Right cardiac atrium (tissue), 5 donors: ENCODE measurements at regions of chr15 and their contacts with region 1.

Region 1: GRCh38 chr15:52261498-52262242 is 33.9 kb downstream of the MYO5C start:
- DNase-seq: peak; percentile 55 to 75 (median 73)
- ATAC-seq: peak; percentile 90 to 96
- H3K4me3 ChIP-seq: no peak overlapping the region
- H3K27ac ChIP-seq: peak overlapping the region; percentile 13
- H3K4me1 ChIP-seq: peaks cover 5% of the 10 kb centered on the region
- H3K27me3 ChIP-seq: no peaks in the 10 kb centered on the region

Region 2: GRCh38 chr15:51718219-51718618 is 543.5 kb before region 1 on chr15:
- intact Hi-C with region 1: loop called in 1 of 4 experiments (anchors 10 kb)
- DNase-seq: no peak
- ATAC-seq: no peak
- H3K4me3 ChIP-seq: no peak overlapping the region
- H3K27ac ChIP-seq: no peak overlapping the region
- H3K4me1 ChIP-seq: peaks cover 7% of the 10 kb centered on the region
- H3K27me3 ChIP-seq: no peaks in the 10 kb centered on the region